Activated CD4-positive, alpha-beta memory T cell treated with anti-CD3 and anti-CD28 coated beads for 36 hours (primary cell): ENCODE measurements at regions of chr17 and their contacts with region 1.

Region 1: GRCh38 chr17:73311781-73312641 is at the start of gene CDC42EP4:
- DNase-seq: peak; percentile 94
- H3K4me3 Mint-ChIP-seq: peak within 1 kb of the TSS; percentile 81
- H3K27ac Mint-ChIP-seq: no peak within 1 kb of the TSS
- H3K4me1 Mint-ChIP-seq: peaks cover 14% of the 10 kb centered on the region
- H3K27me3 Mint-ChIP-seq: no peaks in the 10 kb centered on the region
- total RNA-seq, gene CDC42EP4: 1.6 to 1.7 TPM

Region 2: DNA sequence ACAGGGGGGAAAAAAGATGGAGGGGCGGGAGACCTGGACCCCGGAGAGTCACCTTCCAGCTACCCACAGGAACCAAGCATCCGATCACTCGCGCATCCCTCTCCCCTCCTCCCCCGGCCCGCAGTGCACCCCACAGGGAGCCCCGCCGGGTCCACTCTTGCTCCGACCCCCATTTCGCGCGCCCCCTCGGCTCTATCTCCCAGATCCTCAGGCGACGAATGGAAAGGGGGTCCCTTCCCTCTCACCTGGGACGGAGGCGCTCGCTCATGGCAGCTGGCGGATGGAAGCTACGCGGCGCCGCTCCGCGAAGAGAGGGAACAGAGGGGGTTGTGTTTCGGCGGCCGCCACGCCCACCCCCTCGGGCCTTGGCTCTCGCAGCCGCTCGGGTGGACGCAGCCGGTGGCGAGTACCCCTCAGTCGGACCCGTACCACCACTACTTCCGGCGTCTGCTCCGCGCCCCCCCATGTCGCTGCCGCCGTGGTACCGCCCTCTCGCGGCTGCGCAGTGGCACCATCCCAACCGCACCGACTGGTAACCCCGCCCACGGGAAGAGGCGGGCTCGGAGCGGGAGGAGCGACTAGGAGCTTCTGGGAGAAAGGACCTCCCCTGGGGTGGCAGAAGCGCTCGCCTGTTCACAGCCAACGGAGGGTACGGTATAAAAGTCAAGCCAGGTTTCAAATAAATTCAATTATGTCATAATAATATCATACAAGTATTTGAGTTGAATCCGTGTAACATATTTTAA is 80.0 kb before region 1 on chr17:
- CTCF ChIA-PET with region 1: no interaction called
- POLR2A ChIA-PET with region 1: no interaction called
- intact Hi-C with region 1: loop called (anchors 2 kb)
- DNase-seq: peak; percentile 98
- H3K4me3 Mint-ChIP-seq: peak overlapping the region; percentile 94
- H3K27ac Mint-ChIP-seq: peak overlapping the region; percentile 94
- H3K4me1 Mint-ChIP-seq: peaks cover 50% of the 10 kb centered on the region
- H3K27me3 Mint-ChIP-seq: no peaks in the 10 kb centered on the region

Region 3: DNA sequence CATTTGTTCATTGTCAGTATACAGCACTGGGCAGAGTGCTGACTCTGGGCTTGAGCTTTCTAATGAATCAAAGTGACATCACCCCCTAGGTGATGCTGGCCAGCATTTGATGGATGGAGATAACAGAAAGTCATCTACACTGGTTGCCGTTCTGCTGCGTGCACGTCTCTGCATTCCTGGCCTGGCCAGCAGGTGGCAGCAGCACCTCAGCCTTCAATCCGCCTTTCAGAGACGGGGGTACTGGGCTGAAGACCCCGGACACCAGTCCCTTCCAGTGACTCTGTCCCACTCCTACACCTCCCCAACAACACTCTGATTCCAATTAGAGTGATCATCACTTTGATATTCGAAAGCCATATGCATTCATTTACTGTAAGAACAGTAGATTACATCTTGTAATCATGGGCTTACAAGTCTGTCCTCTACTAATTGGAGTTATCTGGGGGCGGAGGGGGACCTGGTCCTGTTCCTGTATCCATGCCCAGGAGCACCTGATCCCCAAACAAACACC is 56.3 kb before region 1 on chr17:
- CTCF ChIA-PET with region 1: interaction called, 6 read pairs
- POLR2A ChIA-PET with region 1: no interaction called
- intact Hi-C with region 1: loop called (anchors 5 kb)
- DNase-seq: peak; percentile 65
- H3K4me3 Mint-ChIP-seq: no peak overlapping the region
- H3K27ac Mint-ChIP-seq: no peak overlapping the region
- H3K4me1 Mint-ChIP-seq: peaks cover 3% of the 10 kb centered on the region
- H3K27me3 Mint-ChIP-seq: no peaks in the 10 kb centered on the region

Region 4: GRCh38 chr17:73340093-73340596 is 28.1 kb after region 1 on chr17:
- CTCF ChIA-PET with region 1: interaction called, 5 read pairs
- POLR2A ChIA-PET with region 1: no interaction called
- intact Hi-C with region 1: loop called (anchors 2 kb)
- DNase-seq: peak; percentile 31
- H3K4me3 Mint-ChIP-seq: no peak overlapping the region
- H3K27ac Mint-ChIP-seq: no peak overlapping the region
- H3K4me1 Mint-ChIP-seq: peaks cover 6% of the 10 kb centered on the region
- H3K27me3 Mint-ChIP-seq: peaks cover 2% of the 10 kb centered on the region

Region 5: DNA sequence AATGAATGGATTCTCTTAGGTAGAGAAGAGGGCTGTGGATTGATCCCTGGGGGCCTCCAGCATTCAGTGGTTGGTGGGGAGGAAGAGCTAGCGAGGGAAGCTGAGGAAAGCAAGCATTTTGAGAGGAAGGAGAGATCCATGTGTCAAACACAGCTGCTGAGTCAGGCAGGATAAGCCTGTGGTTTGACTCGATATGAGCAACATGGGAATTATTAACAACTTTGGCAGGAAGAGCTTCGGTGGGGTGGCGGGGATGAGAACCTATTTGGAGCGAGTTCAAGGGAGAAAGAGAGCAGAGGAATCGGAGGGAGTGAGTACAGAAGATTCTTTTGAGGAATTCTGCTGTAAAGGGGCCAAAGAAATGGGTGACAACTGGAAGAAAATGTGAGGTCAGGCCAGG is 59.3 kb after region 1 on chr17:
- CTCF ChIA-PET with region 1: interaction called, 38 read pairs
- POLR2A ChIA-PET with region 1: no interaction called
- intact Hi-C with region 1: loop called (anchors 1 kb)
- DNase-seq: no peak
- H3K4me3 Mint-ChIP-seq: no peak overlapping the region
- H3K27ac Mint-ChIP-seq: no peak overlapping the region
- H3K4me1 Mint-ChIP-seq: no peaks in the 10 kb centered on the region
- H3K27me3 Mint-ChIP-seq: peaks cover 6% of the 10 kb centered on the region